ENCODE measurements at regions of chr11 and their contacts with region 1.

Region 1: GRCh38 chr11:447923-448731 is 2.0 kb upstream of the PTDSS2 start:
- DNase-seq: no peak
- H3K4me3 ChIP-seq: peak overlapping the region; percentile 59 to 66
- H3K27ac ChIP-seq: peak overlapping the region; percentile 83
- H3K4me1 ChIP-seq: peaks cover 40% of the 10 kb centered on the region
- H3K27me3 ChIP-seq: no peaks in the 10 kb centered on the region
- CTCF ChIP-seq: peak; percentile 69 to 89 (median 79)
- POLR2A ChIP-seq: peak in 1 of 2 donors; percentile 76

Region 2: GRCh38 chr11:250740-251299 is 197.3 kb before region 1 on chr11:
- intact Hi-C with region 1: loop called (anchors 10 kb)
- DNase-seq: peak in 1 of 2 donors; percentile 60
- H3K4me3 ChIP-seq: no peak overlapping the region
- H3K27ac ChIP-seq: no peak overlapping the region
- H3K4me1 ChIP-seq: no peaks in the 10 kb centered on the region
- H3K27me3 ChIP-seq: no peaks in the 10 kb centered on the region
- CTCF ChIP-seq: peak in 2 of 3 experiments; percentile 46 to 53
- POLR2A ChIP-seq: no peak

Region 3: DNA sequence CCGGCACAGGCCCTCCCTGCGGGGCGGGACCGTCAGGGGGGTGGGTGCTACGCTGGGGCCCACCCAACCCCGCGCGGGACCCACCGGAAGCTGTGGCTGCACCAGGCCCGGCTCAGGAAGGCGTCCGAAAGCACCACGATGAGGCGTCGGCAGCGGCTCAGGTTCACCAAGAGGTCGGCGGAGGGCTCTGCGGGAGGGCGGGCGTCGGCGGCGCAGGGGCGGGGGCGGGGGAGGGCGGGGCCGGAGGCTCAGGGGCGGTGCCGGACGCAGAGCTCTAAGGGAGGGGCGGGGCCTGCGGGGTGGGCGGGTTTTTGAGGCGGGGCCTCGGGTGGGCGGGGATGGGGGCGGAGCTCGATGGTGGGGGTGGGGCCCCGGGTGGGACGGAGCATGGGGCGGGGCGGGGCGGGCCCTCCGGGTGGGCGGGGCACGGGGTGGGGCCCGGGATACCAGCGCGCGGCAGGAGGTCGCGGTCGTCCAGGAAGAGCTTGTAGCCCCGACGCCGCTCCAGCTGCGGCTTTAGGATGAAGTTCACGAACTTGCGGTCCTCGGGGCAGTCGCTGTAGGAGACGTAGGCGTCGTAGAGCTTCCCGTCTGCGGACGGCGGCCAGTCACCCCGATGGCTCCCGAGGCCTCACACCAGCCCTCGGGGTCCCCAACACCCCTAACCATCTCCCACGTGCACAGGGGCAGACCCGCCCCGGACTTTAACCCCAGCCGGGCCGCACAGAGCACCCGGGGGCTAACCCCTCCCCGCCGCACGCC is 41.0 kb before region 1 on chr11:
- intact Hi-C with region 1: no loop called
- DNase-seq: no peak
- H3K4me3 ChIP-seq: peak overlapping the region; percentile 47 to 52
- H3K27ac ChIP-seq: peak overlapping the region; percentile 57
- H3K4me1 ChIP-seq: peaks cover 22% of the 10 kb centered on the region
- H3K27me3 ChIP-seq: no peaks in the 10 kb centered on the region
- CTCF ChIP-seq: no peak
- POLR2A ChIP-seq: no peak

Region 4: DNA sequence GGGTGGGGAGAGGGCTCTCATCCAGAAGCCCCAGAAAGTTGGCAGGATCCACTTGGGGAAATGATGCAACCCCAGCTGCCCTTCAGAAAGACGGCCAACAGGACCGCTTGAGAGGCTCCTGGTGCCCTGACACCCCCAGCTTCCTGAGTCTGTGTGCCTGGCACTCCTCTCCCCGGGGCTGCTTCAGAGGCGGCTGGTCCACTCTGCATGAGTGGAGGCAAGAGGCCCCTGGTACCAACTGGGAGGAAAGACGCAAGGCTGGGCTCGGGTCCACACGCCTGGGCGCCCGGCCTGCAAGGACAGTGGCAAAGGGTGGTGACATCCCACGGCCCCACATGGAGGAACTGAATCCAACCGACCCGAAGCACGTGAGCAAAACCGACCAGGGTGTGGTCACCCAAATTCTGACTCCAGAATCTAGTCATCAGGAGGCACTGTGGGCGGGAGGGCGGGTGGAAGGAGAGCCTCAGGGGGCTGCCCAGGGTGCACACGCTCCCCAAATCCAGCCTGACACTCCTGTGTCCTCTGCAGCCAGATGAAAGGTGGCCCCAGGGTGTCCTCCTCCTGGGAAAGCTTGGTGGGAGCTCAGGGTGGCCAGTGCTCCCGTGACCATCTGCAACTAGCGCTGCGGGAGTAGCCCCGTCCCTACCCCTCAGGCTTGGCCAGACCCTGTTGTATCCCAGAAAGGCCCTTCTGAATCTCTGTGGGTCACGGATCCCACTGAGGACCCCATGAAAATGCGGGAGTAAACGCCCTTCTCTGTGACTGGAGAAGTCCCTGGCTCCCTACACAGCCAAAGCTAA is 55.3 kb after region 1 on chr11:
- intact Hi-C with region 1: loop called (anchors 5 kb)
- DNase-seq: no peak
- H3K4me3 ChIP-seq: peak overlapping the region; percentile 50 to 54
- H3K27ac ChIP-seq: peak overlapping the region; percentile 99
- H3K4me1 ChIP-seq: peaks cover 53% of the 10 kb centered on the region
- H3K27me3 ChIP-seq: no peaks in the 10 kb centered on the region
- CTCF ChIP-seq: no peak
- POLR2A ChIP-seq: no peak

Measured in vagina (tissue), 2 donors.